AG04449 (cell line): ENCODE measurements at regions of chr2 and their contacts with region 1.

Region 1: GRCh38 chr2:31333527-31334183 is 80.9 kb downstream of the XDH start:
- DNase-seq: no peak
- H3K4me3 ChIP-seq: no peak overlapping the region
- CTCF ChIP-seq: peak; percentile 82

Region 2: DNA sequence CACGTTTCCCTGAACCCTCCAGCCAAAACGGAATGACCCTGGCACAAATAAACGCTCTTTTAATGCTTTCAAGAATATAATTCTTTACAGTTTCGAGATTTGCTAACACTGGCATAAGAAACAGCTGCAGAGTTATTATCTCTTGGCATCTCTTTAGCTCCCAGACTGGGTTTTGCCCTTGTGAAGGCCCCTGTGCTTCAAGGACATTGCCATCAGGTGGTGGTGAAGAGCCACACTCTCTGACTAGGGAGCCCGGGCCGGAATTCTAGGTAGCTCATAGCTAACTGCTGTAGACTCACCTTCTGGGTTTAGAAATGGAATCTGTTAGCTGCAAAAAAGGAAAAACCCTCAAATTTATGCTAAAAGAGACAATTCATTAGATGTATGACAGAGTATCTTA is 182.2 kb before region 1 on chr2:
- CTCF ChIA-PET with region 1: interaction called, 10 read pairs
- POLR2A ChIA-PET with region 1: no interaction called
- DNase-seq: no peak
- H3K4me3 ChIP-seq: no peak overlapping the region
- CTCF ChIP-seq: no peak

Region 3: DNA sequence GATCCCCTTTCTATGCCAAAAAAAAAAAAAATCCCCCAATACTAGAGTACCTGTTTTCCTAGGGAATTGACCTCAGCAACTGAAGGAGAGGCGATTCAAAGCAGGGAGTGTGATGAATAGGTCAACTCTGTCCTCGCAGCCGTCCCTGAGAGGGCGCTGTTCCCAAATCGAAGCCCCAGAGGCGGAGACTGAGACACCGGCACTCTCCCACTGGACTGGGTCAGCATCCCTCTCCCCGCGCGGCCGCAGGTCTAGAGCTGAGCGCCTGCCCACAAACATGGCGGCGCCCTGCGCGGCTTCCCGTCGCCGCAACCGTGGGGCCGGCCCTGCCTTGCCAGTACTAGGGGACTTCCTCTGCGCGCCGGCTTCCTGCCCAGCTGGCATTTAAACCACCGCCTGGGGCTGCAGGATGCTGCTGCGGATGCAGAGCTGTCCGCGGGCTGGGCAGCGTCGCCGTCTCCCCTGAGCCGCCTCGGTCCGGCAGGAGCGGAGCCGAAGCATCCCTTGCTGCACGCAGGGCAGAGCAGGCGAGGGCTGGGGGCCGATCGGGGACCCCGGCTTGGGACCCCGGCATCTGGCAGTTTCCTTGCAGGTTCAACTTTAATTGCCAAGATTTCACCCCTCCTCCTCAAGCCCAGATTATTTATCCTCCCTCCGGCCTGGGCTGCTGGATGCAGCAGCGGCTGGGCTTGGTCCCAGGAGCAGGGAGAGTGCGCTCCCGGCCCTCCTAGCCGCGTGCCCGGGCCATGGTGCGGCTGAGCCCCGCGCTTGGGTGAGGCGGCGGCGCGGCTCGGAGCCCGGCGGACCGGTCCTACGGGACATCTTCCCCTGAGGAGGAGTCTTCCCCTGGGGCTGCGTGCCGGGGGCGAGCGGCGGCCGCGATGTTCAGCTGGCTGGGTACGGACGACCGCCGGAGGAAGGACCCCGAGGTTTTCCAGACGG is 99.6 kb before region 1 on chr2 and contains the start of gene EHD3:
- CTCF ChIA-PET with region 1: interaction called, 72 read pairs
- POLR2A ChIA-PET with region 1: interaction called, 4 read pairs
- DNase-seq: no peak
- H3K4me3 ChIP-seq: peak within 1 kb of the TSS; percentile 79
- CTCF ChIP-seq: peak; percentile 85

Region 4: GRCh38 chr2:31312898-31313297 is 20.8 kb before region 1 on chr2:
- CTCF ChIA-PET with region 1: interaction called, 102 read pairs
- POLR2A ChIA-PET with region 1: no interaction called
- DNase-seq: no peak
- H3K4me3 ChIP-seq: no peak overlapping the region
- CTCF ChIP-seq: no peak

Region 5: DNA sequence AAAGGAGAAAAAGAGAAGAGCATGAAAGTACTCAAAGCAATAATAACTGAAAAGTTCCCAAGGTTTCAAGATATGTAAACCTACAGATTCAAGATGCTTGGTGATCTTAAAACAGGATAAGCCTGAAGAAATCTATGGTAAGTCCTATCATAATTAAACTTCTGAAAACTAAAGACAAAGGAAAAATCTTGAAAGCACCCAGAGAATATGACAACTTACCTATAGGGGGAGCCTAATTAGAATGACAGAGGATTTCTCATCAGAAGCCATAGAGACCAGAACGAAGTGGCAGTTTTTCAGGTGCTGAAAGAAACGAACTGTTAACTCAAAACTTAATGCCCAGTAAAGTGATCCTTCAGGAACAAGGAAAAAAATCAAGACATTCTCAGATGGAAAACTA is 21.2 kb after region 1 on chr2:
- CTCF ChIA-PET with region 1: interaction called, 11 read pairs
- POLR2A ChIA-PET with region 1: interaction called, 3 read pairs
- DNase-seq: no peak
- H3K4me3 ChIP-seq: no peak overlapping the region
- CTCF ChIP-seq: peak; percentile 12

Region 6: GRCh38 chr2:31729764-31730092 is 396.1 kb after region 1 on chr2:
- CTCF ChIA-PET with region 1: interaction called, 12 read pairs
- POLR2A ChIA-PET with region 1: no interaction called
- DNase-seq: peak; percentile 4
- H3K4me3 ChIP-seq: no peak overlapping the region
- CTCF ChIP-seq: peak; percentile 60